Lower leg skin (tissue), 4 donors: ENCODE measurements at regions of chr5 and their contacts with region 1.

Region 1: DNA sequence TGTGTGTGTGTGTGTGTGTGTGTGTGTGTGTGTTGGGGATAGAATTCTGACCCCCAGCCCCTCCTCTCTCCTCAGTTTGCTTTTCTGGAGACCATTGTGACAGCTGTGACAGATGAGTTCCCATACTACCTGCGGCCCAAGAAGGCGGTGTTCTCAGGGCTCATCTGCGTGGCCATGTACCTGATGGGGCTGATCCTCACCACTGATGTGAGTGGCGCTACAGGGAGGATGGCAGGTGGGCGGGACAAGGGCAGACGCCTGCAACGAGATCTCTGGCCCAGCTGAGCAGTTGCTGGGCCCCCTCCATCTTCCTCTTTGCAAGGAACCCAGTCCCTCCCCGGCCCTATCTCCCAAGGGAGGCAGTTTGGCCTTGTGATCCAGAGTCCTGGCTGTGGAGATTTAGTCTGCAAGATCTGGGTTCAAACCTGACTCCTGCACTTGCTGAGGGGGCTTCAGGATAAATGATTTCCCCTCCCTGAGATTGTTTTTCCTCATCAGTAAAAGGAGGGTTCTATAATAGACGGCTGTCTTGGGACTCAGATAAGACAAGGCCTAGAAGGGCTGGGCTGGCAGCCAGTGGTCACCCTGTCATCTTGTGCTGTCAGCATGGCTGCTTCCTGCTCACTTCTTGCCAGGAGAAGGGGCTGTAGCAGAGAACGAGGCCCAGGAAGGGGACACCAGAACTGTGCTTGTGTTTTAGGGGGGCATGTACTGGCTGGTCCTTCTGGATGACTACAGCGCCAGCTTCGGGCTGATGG is 14.1 kb downstream of the SLC6A7 start:
- DNase-seq: no peak
- H3K4me3 ChIP-seq: no peak overlapping the region
- CTCF ChIP-seq: no peak
- POLR2A ChIP-seq: no peak

Region 2: DNA sequence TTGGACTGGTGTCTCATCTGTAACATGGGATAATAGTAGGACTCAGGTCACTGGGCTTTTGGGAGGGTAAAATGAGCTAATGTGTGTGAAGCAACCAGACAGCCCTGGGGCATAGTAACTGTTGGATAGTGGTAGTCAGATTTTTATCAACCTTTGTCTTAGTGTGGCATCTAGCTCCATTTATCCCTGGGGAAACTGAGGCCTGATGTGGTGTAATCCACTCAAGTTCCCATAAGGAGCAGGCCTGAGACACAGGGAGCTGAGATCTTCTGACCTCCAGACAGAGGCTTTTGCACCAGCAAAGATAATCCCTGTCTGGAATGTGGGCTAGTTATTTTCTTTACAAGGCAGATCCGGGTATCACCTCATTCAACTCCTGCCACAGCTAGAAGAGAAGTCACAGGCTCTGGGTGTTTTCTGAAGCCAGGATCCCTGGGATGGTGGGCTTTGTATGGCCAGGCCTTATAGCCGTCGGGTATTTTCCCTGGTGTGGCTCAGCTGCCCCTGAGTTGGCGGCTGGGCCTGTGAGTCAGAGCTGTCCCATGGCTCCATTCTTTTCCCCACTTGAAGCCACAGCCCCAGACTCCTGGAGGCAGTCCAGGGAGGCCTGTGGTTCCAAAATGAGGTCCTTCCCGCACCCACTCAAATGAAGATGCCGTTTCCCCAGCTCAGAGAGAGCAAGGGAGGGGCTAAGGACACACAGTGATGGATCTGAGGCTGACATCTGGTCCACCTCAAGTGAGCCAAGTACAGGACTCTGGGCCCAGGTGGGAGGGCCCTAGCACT is 91.6 kb before region 1 on chr5:
- intact Hi-C with region 1: no loop called
- DNase-seq: peak; percentile 58 to 95
- H3K4me3 ChIP-seq: no peak overlapping the region
- CTCF ChIP-seq: no peak
- POLR2A ChIP-seq: no peak

Region 3: DNA sequence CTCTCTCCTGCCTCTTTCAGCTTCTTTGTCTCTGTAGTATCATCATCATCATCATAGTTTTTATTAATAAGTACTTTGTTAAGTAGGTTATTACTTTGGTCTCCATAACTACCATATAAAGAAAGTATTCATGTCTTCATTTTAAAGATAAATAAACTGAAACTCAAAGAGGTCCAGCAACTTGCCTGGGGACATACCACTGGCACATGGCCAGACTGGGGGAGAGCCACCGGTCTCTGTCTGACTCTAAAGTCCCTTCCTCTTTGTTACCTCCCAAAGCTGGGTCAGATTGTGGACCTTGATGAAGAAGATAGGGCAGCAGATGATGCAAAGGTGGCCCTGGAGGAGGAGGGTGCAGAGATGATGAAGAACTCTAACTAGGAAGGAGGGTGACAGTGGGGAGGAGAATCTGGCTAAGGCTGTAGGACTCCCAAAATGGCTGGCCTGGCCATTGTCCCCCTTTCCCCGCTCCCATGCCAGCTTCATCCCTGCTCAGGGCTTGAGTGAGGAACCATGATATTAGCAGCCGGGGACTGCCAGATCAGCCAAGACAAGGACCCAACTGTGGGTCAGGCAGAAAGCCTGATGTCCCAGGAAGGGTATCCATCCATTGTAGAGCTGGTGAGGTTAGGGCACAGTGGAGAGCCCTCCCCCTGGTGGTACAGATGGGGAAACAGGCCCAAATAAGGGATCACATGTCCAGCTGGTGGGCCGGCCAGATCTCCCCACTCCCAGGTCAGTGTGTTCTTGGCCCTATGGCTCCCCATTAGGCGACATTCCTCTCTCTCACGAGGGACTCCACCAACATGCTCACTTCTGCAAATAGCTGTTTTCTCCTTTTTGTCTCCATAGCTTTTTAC is 28.7 kb before region 1 on chr5:
- intact Hi-C with region 1: loop called (anchors 2 kb)
- DNase-seq: no peak
- H3K4me3 ChIP-seq: no peak overlapping the region
- CTCF ChIP-seq: no peak
- POLR2A ChIP-seq: no peak

Region 4: DNA sequence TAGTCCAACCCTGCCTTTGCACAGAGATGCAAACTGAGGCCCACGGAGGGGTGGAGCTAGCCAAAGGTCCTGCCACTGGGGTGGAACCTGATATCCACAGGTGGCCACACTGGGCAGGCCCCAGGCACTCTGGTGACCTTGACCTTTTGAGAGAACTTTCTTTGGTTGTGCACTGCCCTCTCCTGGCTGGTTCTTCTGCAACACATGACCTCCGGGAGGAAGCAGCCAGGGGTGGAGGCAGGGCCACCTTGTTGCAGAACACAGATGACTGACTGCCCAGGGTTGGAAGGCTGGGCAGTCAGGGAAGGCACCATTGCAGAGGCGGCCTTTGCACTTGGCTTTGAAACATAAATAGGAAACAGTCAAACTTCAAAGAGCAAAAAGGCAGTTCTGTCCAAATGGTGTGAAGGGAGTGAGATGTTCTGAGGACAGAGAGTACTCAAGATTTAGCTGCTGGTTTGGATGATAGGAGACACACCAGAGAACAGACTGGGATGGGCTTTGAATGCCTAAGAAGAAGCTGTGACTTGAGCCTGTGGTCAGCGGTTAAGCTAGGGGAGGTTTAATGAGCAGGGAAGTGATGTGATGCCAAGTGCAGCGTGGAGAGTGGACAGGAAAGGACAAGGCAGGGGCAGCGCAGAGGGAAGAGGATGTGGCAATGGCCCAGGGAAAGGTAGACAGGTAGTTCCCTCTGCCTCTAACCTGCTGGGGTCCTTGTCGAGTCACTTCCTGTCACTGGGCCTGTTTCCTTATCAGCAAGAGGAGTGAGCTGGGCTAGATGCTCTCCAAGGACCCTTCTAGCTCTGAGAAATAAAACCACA is 146.7 kb after region 1 on chr5:
- intact Hi-C with region 1: no loop called
- DNase-seq: peak; percentile 70 to 91
- H3K4me3 ChIP-seq: no peak overlapping the region
- CTCF ChIP-seq: peak in 1 of 3 donors; percentile 8
- POLR2A ChIP-seq: no peak

Region 5: GRCh38 chr5:151427258-151427657 is 1223.2 kb after region 1 on chr5:
- intact Hi-C with region 1: no loop called
- DNase-seq: no peak
- H3K4me3 ChIP-seq: no peak overlapping the region
- CTCF ChIP-seq: no peak
- POLR2A ChIP-seq: no peak